Caco-2 (cell line): ENCODE measurements at regions of chr2 and their contacts with region 1.

Region 1: DNA sequence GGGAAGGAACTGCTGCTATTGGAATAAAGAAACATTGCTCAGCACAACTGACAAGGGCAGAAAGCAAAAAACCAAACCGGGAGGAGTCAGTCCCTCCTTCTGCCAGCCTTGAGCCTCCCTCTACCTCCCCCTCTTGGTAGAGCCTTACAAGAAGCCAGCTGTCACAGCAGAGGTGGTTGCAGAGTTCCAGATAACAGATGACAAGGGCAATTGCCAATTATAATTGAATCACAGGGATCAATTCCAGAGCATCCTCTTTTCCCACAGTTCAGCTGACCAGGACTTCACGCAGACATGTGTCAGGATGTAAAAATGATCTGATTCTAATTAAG is 548.2 kb upstream of the LRRTM1 start:
- DNase-seq: peak in 1 of 2 experiments; percentile 14
- H3K4me3 ChIP-seq: no peak overlapping the region
- H3K4me3 Mint-ChIP-seq: no peak overlapping the region
- H3K27ac Mint-ChIP-seq: no peak overlapping the region
- H3K4me1 ChIP-seq: peaks cover 7% of the 10 kb centered on the region
- H3K4me1 Mint-ChIP-seq: no peaks in the 10 kb centered on the region
- H3K27me3 ChIP-seq: no peaks in the 10 kb centered on the region
- H3K27me3 Mint-ChIP-seq: no peaks in the 10 kb centered on the region
- CTCF ChIP-seq: peak; percentile 24 to 58

Region 2: DNA sequence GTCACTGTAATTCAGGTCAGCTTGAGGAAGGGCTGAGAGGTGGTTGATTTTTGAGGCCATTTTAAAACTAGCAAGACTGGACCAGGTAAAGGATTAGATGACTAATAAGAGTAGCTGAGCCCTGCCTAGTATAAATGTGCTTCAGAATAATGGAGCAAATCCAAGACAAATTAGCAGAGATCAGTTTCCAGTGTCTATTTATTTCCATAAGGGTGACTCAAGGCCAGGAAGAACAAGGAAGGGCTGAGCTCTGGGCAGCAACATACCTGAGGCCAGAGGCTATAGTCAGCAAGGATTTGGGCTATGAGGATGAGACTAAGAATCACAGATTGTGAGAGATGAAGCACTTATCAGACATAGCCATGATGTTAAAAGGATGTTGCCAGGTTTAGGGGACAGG is 209.2 kb before region 1 on chr2:
- CTCF ChIA-PET with region 1: no interaction called
- POLR2A ChIA-PET with region 1: no interaction called
- intact Hi-C with region 1: loop called (anchors 5 kb)
- DNase-seq: no peak
- H3K4me3 ChIP-seq: no peak overlapping the region
- H3K4me3 Mint-ChIP-seq: no peak overlapping the region
- H3K27ac Mint-ChIP-seq: no peak overlapping the region
- H3K4me1 ChIP-seq: peaks cover 28% of the 10 kb centered on the region
- H3K4me1 Mint-ChIP-seq: no peaks in the 10 kb centered on the region
- H3K27me3 ChIP-seq: no peaks in the 10 kb centered on the region
- H3K27me3 Mint-ChIP-seq: no peaks in the 10 kb centered on the region
- CTCF ChIP-seq: no peak

Region 3: GRCh38 chr2:81283081-81283480 is 430.3 kb after region 1 on chr2:
- CTCF ChIA-PET with region 1: no interaction called
- POLR2A ChIA-PET with region 1: no interaction called
- intact Hi-C with region 1: no loop called
- DNase-seq: no peak
- H3K4me3 ChIP-seq: no peak overlapping the region
- H3K4me3 Mint-ChIP-seq: no peak overlapping the region
- H3K27ac Mint-ChIP-seq: no peak overlapping the region
- H3K4me1 ChIP-seq: no peaks in the 10 kb centered on the region
- H3K4me1 Mint-ChIP-seq: no peaks in the 10 kb centered on the region
- H3K27me3 ChIP-seq: no peaks in the 10 kb centered on the region
- H3K27me3 Mint-ChIP-seq: no peaks in the 10 kb centered on the region
- CTCF ChIP-seq: no peak